ENCODE measurements at regions of chr18 and their contacts with region 1.

Region 1: GRCh38 chr18:21489119-21489750 is 111.3 kb downstream of the ESCO1 start:
- DNase-seq: peak in 2 of 10 donors; percentile 25 to 37
- H3K4me3 ChIP-seq: no peak overlapping the region
- H3K27ac ChIP-seq: no peak overlapping the region
- H3K27me3 ChIP-seq: no peaks in the 10 kb centered on the region
- CTCF ChIP-seq: peak; percentile 45 to 78 (median 67)

Region 2: GRCh38 chr18:21600526-21601410 is 111.5 kb after region 1 on chr18 and contains the start of gene ESCO1:
- intact Hi-C with region 1: loop called in 1 of 2 experiments (anchors 10 kb)
- DNase-seq: peak; percentile 81 to 96 (median 91)
- H3K4me3 ChIP-seq: peak within 1 kb of the TSS; percentile 63 to 100 (median 96)
- H3K27ac ChIP-seq: peak within 1 kb of the TSS; percentile 25 to 99 (median 93)
- H3K27me3 ChIP-seq: no peaks in the 10 kb centered on the region
- CTCF ChIP-seq: peak; percentile 85 to 99 (median 96)
- total RNA-seq, gene ESCO1: 13.0 to 29.8 (median 18.0) TPM

Region 3: GRCh38 chr18:21841570-21841969 is 352.3 kb after region 1 on chr18:
- intact Hi-C with region 1: loop called in 1 of 2 experiments (anchors 10 kb)
- DNase-seq: no peak
- H3K4me3 ChIP-seq: no peak overlapping the region
- H3K27ac ChIP-seq: no peak overlapping the region
- H3K27me3 ChIP-seq: no peaks in the 10 kb centered on the region
- CTCF ChIP-seq: no peak

Region 4: DNA sequence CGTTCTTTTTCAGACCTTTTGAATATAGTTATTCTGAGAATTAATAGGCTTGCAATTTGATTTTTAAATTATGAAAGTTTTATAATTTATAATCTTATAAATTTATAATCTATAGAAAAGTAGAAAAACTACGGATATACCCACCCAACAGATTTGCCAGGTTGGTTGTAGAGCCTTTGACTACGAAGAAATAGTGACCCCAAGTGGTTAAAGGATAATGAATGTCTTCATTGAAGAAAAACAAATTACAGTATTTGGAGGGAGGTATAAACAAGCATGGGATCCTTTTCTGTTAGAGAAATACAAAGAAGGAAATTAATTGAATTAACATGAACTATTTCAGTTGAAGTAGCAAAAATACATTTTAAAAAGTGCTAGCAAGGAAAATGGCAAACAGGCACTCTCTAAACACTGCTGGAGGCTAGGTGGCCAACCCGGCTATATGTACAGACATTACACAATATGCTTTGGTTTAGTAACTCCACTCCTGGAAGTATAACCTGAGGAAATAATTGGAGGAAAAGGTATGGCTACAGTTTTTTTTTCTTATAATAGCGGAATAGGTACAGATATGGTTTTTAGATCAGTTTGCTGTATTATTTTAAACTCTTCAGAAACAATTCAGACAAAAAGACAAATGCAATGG is 362.2 kb after region 1 on chr18:
- intact Hi-C with region 1: loop called (anchors 5 to 10 kb)
- DNase-seq: no peak
- H3K4me3 ChIP-seq: no peak overlapping the region
- H3K27ac ChIP-seq: no peak overlapping the region
- H3K27me3 ChIP-seq: no peaks in the 10 kb centered on the region
- CTCF ChIP-seq: peak in 53 of 56 donors; percentile 34 to 80 (median 52)